PC-9 (cell line): ENCODE measurements at regions of chr4 and their contacts with region 1.

Region 1: GRCh38 chr4:108834835-108835384 is 72.1 kb upstream of the ETNPPL start:
- DNase-seq: no peak
- H3K4me3 ChIP-seq: no peak overlapping the region
- H3K27ac ChIP-seq: no peak overlapping the region
- H3K4me1 ChIP-seq: no peaks in the 10 kb centered on the region
- H3K27me3 ChIP-seq: no peaks in the 10 kb centered on the region
- CTCF ChIP-seq: peak; percentile 70

Region 2: GRCh38 chr4:107801766-107802211 is 1033.1 kb before region 1 on chr4:
- CTCF ChIA-PET with region 1: no interaction called
- POLR2A ChIA-PET with region 1: no interaction called
- intact Hi-C with region 1: no loop called
- DNase-seq: no peak
- H3K4me3 ChIP-seq: no peak overlapping the region
- H3K27ac ChIP-seq: no peak overlapping the region
- H3K4me1 ChIP-seq: no peaks in the 10 kb centered on the region
- H3K27me3 ChIP-seq: no peaks in the 10 kb centered on the region
- CTCF ChIP-seq: no peak

Region 3: DNA sequence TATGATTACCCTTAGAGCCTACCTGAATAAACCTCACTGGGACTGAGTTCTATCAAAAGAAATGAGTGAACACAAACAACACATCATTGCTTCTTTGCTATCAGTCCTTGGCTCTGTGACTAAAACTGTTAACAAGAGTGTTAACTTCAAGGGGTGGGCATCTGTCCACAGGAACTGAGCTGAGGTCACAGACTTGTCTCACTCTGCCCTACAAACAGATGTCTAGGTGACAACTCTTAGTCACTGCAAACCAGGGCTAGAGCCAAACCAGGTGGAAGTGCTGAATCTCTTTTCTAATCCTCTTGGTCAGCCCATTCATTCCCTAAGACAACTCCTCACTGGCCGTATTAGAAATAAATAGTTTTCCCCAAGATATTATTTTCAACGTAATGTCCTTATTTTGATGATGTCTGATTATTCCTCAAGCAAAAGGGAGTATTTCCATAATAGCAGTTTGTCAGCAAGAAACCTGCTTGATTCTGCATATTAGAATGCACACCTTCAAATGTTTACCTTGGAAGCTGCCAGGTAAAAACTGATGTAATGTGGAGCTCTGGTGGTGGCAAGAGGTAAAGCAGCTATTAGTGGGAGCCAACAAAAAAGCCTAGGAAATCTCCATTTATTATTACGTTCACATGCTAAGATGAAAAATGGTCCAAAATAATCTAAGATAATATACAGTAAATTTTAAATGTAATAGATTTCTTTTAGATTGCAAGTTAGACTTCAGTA is 463.5 kb after region 1 on chr4:
- CTCF ChIA-PET with region 1: no interaction called
- POLR2A ChIA-PET with region 1: no interaction called
- intact Hi-C with region 1: loop called (anchors 2 kb)
- DNase-seq: no peak
- H3K4me3 ChIP-seq: no peak overlapping the region
- H3K27ac ChIP-seq: no peak overlapping the region
- H3K4me1 ChIP-seq: no peaks in the 10 kb centered on the region
- H3K27me3 ChIP-seq: no peaks in the 10 kb centered on the region
- CTCF ChIP-seq: peak; percentile 72

Region 4: DNA sequence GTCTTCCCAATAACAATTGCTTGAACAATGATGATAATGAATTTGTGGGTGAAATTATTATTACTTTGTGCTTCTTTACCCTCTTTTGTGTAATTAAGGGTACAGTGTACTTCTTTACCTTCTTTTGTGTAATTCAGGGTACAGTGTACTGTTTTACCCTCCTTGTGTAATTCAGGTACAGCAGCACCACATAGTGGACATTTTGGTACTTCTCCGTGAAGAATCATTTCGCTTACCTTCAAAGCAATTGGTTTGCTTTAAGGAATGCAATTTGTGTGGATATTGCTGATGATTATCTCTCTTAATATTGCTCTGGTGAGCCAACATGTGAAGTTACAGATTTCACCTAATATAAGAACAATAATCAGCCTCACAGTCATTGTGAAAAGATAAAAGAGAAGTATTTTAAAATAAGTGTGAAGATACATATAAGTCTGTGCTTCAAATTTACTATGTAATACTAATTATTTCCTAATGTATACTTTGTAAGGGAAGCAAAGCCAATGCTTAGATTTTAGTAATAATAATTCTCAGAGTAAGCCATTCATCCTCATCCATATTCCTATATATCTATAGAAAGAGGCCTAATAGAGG is 571.5 kb after region 1 on chr4:
- CTCF ChIA-PET with region 1: no interaction called
- POLR2A ChIA-PET with region 1: no interaction called
- intact Hi-C with region 1: loop called (anchors 1 kb)
- DNase-seq: peak in 1 of 2 experiments; percentile 4
- H3K4me3 ChIP-seq: no peak overlapping the region
- H3K27ac ChIP-seq: no peak overlapping the region
- H3K4me1 ChIP-seq: no peaks in the 10 kb centered on the region
- H3K27me3 ChIP-seq: no peaks in the 10 kb centered on the region
- CTCF ChIP-seq: peak; percentile 70